ENCODE measurements at regions of chr20 and their contacts with region 1.

Region 1: DNA sequence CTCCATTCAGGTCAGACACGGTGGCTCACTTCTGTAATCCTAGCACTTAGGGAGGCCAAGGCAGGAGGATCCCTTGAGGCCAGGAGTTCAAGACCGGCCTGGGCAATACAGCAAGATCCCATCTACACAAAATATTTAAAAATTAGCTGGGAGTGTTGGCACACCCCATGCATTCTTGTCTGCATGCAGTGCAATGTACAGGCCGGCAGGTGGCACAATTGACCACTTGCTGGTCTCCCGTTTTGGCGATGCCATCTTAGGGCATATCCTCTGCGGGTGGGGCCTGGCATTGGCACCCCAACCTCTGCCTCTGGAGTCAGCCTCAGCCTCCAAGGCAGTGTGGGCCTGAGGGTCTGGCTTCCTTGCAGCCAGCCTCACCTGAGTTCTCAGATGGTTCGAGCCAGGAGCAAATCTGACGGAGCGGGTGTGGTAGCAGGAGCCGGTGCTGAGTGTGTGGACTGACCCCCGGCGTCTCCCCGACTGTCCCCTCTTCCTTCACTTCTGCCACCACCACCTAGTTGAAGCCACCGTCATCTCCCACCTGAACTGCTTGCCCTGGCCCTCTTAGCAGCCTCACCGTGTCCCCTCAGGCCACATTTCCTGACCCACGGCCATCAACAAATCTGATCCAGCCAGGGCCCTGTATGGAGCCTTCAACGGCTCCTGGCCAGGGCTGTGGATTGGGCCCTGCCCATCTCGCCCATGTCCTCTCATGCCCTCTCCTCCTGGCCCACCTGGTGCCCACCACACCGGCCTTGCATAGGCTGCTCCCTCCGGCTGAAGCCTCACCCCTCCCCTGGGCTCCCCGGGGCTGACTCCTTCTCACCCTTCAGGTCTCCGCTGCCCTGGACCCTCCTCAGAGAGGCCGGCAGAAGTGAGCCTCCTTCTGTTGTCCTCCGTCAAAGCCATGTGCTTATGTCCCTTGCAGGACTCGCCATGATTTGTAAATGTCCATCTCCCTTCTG is 44.0 kb downstream of the EFCAB8 start:
- DNase-seq: no peak
- H3K4me3 ChIP-seq: no peak overlapping the region
- H3K27ac ChIP-seq: no peak overlapping the region
- H3K4me1 ChIP-seq: no peaks in the 10 kb centered on the region
- H3K27me3 ChIP-seq: no peaks in the 10 kb centered on the region
- CTCF ChIP-seq: peak; percentile 40 to 82 (median 76)
- POLR2A ChIP-seq: no peak

Region 2: GRCh38 chr20:32209850-32210605 is 692.7 kb before region 1 on chr20:
- intact Hi-C with region 1: loop called (anchors 5 kb)
- DNase-seq: no peak
- H3K4me3 ChIP-seq: no peak overlapping the region
- H3K27ac ChIP-seq: peak overlapping the region in 1 of 2 donors; percentile 3
- H3K4me1 ChIP-seq: peaks cover 8 to 17% of the 10 kb centered on the region in 2 donors
- H3K27me3 ChIP-seq: no peaks in the 10 kb centered on the region
- CTCF ChIP-seq: no peak
- POLR2A ChIP-seq: no peak

Region 3: GRCh38 chr20:32763202-32764004 is 139.3 kb before region 1 on chr20:
- intact Hi-C with region 1: no loop called
- DNase-seq: no peak
- H3K4me3 ChIP-seq: peak overlapping the region; percentile 62 to 96 (median 74)
- H3K27ac ChIP-seq: no peak overlapping the region
- H3K4me1 ChIP-seq: peaks cover 0 to 6% of the 10 kb centered on the region in 2 donors
- H3K27me3 ChIP-seq: no peaks in the 10 kb centered on the region
- CTCF ChIP-seq: no peak
- POLR2A ChIP-seq: no peak

Measured in breast epithelium (tissue), 4 donors.